AG04450 (cell line): ENCODE measurements at regions of chr17 and their contacts with region 1.

Region 1: GRCh38 chr17:40854159-40854814 is 12.7 kb downstream of the KRT12 start:
- DNase-seq: peak; percentile 47
- H3K4me3 ChIP-seq: no peak overlapping the region
- H3K27ac ChIP-seq: no peak overlapping the region
- H3K27me3 ChIP-seq: no peaks in the 10 kb centered on the region
- CTCF ChIP-seq: no peak

Region 2: GRCh38 chr17:40903129-40904065 is 49.1 kb after region 1 on chr17:
- CTCF ChIA-PET with region 1: interaction called, 10 read pairs
- POLR2A ChIA-PET with region 1: no interaction called
- DNase-seq: no peak
- H3K4me3 ChIP-seq: peak overlapping the region; percentile 21; the same call in 1 of the 2 replicates
- H3K27ac ChIP-seq: peak overlapping the region; percentile 83
- H3K27me3 ChIP-seq: no peaks in the 10 kb centered on the region
- CTCF ChIP-seq: no peak

Region 3: GRCh38 chr17:40909351-40909750 is 55.1 kb after region 1 on chr17:
- CTCF ChIA-PET with region 1: interaction called, 10 read pairs
- POLR2A ChIA-PET with region 1: no interaction called
- DNase-seq: peak; percentile 92
- H3K4me3 ChIP-seq: no peak overlapping the region
- H3K27ac ChIP-seq: peak overlapping the region; percentile 89
- H3K27me3 ChIP-seq: no peaks in the 10 kb centered on the region
- CTCF ChIP-seq: peak; percentile 85

Region 4: DNA sequence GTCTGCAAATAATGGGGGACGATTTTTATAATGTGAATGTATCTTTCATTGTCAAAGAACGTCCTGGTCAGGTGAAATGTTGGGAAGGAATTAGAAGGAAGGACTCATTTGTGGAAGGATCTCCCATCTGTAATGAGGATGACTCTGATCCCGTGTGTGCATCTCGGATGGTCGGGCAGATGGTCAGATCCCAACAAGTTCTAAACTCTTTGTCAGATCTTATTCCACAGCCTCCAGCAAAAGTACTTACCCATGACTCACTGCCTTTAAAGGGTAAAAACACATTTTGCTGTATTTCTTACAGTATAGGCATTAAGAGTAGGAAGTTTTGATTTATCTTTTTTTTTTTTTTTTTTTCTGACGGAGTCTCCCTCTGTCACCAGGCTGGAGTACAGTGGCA is 244.2 kb after region 1 on chr17:
- CTCF ChIA-PET with region 1: no interaction called
- POLR2A ChIA-PET with region 1: no interaction called
- DNase-seq: no peak
- H3K4me3 ChIP-seq: no peak overlapping the region
- H3K27ac ChIP-seq: no peak overlapping the region
- H3K27me3 ChIP-seq: no peaks in the 10 kb centered on the region
- CTCF ChIP-seq: no peak